ENCODE measurements at regions of chr1 and their contacts with region 1.

Region 1: DNA sequence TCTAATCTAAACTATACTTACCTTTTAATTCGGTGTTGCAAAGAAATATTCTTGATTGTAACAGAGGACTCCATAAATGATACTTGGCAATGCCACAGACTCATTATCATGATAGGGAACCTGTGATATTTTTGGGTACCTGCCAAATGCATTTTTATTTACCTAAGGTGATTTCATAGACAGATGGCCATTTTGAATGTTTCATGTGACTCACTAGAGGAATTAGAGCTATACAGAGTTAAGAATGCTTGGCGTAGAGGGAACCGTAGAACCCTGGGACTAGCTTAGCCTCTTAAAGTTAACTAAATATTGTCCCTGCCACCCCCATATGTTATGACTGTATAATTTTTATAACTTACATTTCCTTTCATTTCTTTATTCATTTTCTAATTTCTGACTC is 136.1 kb downstream of the DISP1 start:
- DNase-seq: peak; percentile 10
- H3K4me3 ChIP-seq: no peak overlapping the region
- H3K27ac ChIP-seq: no peak overlapping the region
- H3K4me1 ChIP-seq: no peaks in the 10 kb centered on the region
- H3K27me3 ChIP-seq: no peaks in the 10 kb centered on the region
- CTCF ChIP-seq: no peak

Region 2: DNA sequence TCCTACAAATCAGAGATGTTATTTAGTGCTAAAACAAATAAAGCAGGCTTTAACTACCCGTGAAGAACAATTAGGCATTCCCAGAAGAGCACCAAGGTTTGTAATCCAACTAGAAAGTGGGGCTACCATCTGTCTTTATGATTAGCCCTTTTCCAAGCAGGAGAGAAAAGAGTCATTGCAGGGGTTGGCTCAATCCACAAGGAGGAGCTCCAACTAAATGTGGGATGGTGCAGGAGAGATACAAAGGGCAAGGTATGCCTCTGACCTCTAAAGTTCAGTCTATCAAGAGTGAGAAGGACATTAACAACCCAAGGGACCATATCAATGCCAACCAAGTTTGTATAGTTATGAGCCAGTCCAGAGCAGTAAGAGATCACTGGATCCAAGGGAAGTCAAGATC is 826.3 kb before region 1 on chr1:
- CTCF ChIA-PET with region 1: no interaction called
- dilution Hi-C with region 1: no loop called
- in situ Hi-C with region 1: no loop called
- intact Hi-C with region 1: no loop called
- DNase-seq: no peak
- H3K4me3 ChIP-seq: no peak overlapping the region
- H3K27ac ChIP-seq: no peak overlapping the region
- H3K4me1 ChIP-seq: no peaks in the 10 kb centered on the region
- H3K27me3 ChIP-seq: no peaks in the 10 kb centered on the region
- CTCF ChIP-seq: peak; percentile 30 to 71

Region 3: DNA sequence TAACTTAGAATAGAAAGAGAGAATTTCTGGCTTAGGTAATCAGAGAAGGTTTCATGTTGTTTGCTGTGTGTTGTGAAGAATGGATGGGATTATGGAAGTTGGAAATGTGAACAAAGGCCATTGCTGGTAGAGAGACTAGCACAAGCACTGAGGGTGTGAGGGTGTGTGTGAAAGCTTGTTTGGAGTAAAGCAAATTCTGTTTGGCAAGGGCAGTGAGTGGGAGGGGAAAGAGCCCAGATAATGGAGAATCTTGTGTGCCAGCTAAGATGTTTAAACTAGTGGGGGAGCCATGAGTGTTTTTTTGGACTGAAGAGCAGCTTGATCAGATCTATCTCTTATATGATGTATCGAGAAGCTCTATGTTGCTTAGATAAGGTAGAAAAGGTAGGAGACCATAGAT is 28.9 kb before region 1 on chr1:
- CTCF ChIA-PET with region 1: no interaction called
- dilution Hi-C with region 1: no loop called
- in situ Hi-C with region 1: no loop called
- intact Hi-C with region 1: loop called (anchors 1 kb)
- DNase-seq: no peak
- H3K4me3 ChIP-seq: no peak overlapping the region
- H3K27ac ChIP-seq: no peak overlapping the region
- H3K4me1 ChIP-seq: no peaks in the 10 kb centered on the region
- H3K27me3 ChIP-seq: no peaks in the 10 kb centered on the region
- CTCF ChIP-seq: no peak

Region 4: GRCh38 chr1:222971146-222971545 is 20.3 kb after region 1 on chr1:
- CTCF ChIA-PET with region 1: interaction called, 28 read pairs
- dilution Hi-C with region 1: no loop called
- in situ Hi-C with region 1: no loop called
- intact Hi-C with region 1: no loop called
- DNase-seq: no peak
- H3K4me3 ChIP-seq: no peak overlapping the region
- H3K27ac ChIP-seq: no peak overlapping the region
- H3K4me1 ChIP-seq: no peaks in the 10 kb centered on the region
- H3K27me3 ChIP-seq: peaks cover 4% of the 10 kb centered on the region
- CTCF ChIP-seq: no peak

Measured in mammary epithelial cell (primary cell).